Activated CD8-positive, alpha-beta memory T cell treated with anti-CD3 and anti-CD28 coated beads, Interleukin-2, amount 10 ng/mL, durations not matched to agents 7 days and 5 days (primary cell): ENCODE measurements at regions of chr14 and their contacts with region 1.

Region 1: GRCh38 chr14:105086833-105087307 is 21.6 kb upstream of the GPR132 start:
- DNase-seq: peak; percentile 93
- ATAC-seq: peak; percentile 91
- H3K4me3 Mint-ChIP-seq: peak overlapping the region; percentile 68
- H3K27ac Mint-ChIP-seq: peak overlapping the region; percentile 65
- H3K4me1 Mint-ChIP-seq: peaks cover 27% of the 10 kb centered on the region
- H3K27me3 Mint-ChIP-seq: peaks cover 13% of the 10 kb centered on the region

Region 2: GRCh38 chr14:104895786-104896661 is 190.8 kb before region 1 on chr14:
- CTCF ChIA-PET with region 1: no interaction called
- DNase-seq: peak; percentile 37
- ATAC-seq: no peak
- H3K4me3 Mint-ChIP-seq: no peak overlapping the region
- H3K27ac Mint-ChIP-seq: no peak overlapping the region
- H3K4me1 Mint-ChIP-seq: peaks cover 4% of the 10 kb centered on the region
- H3K27me3 Mint-ChIP-seq: peaks cover 22% of the 10 kb centered on the region

Region 3: DNA sequence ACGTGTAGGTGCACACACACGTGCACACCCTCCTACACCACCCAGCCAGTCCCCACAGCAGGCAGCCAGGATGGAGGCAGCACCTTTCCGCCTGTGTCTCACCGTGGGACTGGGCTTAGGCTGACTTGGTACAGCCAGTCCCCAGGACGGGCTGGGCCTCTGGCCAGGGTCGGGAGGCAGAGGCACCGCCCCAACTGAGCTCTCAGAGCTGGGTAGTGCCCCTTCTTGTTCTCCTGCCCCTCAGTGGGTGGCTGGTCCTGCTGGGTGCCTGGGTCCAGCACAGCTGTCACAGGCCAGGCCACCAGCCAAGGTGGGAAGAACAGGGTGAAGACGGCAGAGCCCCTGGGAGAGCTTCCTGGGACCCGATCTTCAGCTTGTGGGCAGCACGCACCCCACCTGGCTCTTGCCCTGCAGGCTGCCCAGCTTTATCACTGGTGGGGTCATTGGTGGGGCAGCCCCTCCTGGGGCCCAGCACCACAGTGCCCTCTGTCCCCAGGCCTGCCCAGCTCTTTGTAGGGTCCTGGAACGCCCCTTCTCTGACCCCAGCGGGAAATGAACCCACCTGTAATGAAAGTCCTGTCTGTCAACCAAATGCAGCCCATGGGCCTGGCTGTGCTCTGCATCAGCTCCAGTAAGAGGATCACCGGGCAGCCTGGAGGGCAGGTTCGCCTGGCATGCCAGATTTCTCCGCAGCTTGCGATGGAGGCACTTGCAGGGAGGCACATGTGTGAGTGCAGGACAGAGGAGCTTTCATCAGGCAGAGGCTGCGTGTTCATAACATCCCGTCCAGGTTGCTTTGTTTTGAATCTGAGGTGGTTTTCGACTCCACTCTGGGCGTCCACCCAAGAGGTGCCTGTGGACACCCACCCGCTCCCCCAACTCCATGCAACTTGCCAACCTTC is 80.7 kb before region 1 on chr14:
- CTCF ChIA-PET with region 1: no interaction called
- DNase-seq: no peak
- ATAC-seq: no peak
- H3K4me3 Mint-ChIP-seq: no peak overlapping the region
- H3K27ac Mint-ChIP-seq: no peak overlapping the region
- H3K4me1 Mint-ChIP-seq: peaks cover 1% of the 10 kb centered on the region
- H3K27me3 Mint-ChIP-seq: no peaks in the 10 kb centered on the region

Region 4: GRCh38 chr14:105020815-105021655 is 65.8 kb before region 1 on chr14 and contains the start of gene CDCA4:
- CTCF ChIA-PET with region 1: interaction called, 14 read pairs
- DNase-seq: peak; percentile 98
- ATAC-seq: peak; percentile 85
- H3K4me3 Mint-ChIP-seq: peak within 1 kb of the TSS; percentile 98
- H3K27ac Mint-ChIP-seq: peak within 1 kb of the TSS; percentile 90
- H3K4me1 Mint-ChIP-seq: peaks cover 72% of the 10 kb centered on the region
- H3K27me3 Mint-ChIP-seq: no peaks in the 10 kb centered on the region
- total RNA-seq, gene CDCA4: 70.8 to 77.8 TPM

Region 5: GRCh38 chr14:105075379-105076295 is 11.2 kb before region 1 on chr14:
- CTCF ChIA-PET with region 1: interaction called, 103 read pairs
- DNase-seq: peak; percentile 75
- ATAC-seq: peak; percentile 64
- H3K4me3 Mint-ChIP-seq: no peak overlapping the region
- H3K27ac Mint-ChIP-seq: no peak overlapping the region
- H3K4me1 Mint-ChIP-seq: peaks cover 35% of the 10 kb centered on the region
- H3K27me3 Mint-ChIP-seq: peaks cover 5% of the 10 kb centered on the region

Region 6: DNA sequence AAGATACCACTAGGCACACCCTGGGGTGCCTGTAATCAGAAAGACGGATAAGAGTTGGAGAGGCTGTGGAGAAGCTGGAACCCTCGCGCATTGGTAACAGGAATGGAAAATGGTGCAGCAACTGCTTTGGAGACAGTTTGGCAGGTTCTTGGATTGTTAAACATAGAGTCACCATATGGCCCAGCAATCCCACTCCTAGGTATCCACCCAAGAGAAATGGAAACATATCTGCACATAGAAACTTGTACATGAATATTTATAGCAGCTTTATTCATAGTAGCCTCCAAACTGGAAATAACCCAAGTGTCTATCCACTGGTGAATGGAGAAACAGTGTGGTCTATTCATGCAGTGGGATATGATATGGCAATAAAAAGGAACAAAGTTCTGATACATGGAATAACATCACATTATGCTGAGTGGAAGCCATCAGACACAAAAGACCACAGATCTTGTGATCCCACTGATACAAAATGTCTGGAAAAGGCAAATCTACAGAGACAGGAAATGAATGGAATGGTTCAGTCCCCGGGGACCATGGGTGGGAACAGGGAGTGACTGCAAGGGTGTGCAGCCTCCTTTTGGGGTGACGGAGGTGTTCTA is 36.3 kb after region 1 on chr14:
- CTCF ChIA-PET with region 1: no interaction called
- DNase-seq: peak; percentile 23
- ATAC-seq: no peak
- H3K4me3 Mint-ChIP-seq: no peak overlapping the region
- H3K27ac Mint-ChIP-seq: no peak overlapping the region
- H3K4me1 Mint-ChIP-seq: peaks cover 3% of the 10 kb centered on the region
- H3K27me3 Mint-ChIP-seq: peaks cover 27% of the 10 kb centered on the region

Region 7: DNA sequence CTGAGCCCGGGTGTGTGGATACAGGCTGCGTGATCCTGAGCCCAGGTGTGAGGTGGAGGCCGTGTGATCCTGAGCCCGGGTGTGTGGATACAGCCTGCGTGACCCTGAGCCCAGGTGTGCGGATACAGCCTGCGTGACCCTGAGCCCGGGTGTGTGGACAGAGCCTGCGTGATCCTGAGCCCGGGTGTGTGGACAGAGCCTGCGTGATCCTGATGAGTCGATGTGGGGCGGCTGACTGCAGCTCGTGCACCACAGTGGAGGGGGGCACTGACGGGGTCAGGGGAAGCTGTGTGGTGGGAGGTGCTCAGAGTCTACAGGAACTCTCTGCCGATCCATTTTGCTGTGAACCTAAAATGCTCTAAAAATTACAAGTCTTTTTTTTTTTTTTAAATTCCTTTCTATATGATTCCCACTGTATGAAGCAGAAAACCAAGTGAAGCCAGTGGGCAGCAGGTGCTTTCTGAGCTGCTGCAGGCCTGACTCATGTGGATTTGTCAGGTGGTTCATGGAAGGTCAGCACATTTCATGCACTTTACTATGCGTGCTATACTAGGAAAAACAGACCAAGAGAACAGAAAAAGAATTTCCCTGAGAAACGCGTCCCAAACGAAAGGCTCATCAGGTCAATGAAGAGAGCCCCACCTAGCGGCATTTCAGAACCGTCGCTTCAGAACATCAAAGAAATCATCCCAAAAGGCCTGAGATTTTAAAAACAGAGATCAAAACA is 194.7 kb after region 1 on chr14:
- CTCF ChIA-PET with region 1: interaction called, 10 read pairs
- DNase-seq: no peak
- ATAC-seq: no peak
- H3K4me3 Mint-ChIP-seq: no peak overlapping the region
- H3K27ac Mint-ChIP-seq: no peak overlapping the region
- H3K4me1 Mint-ChIP-seq: peaks cover 18% of the 10 kb centered on the region
- H3K27me3 Mint-ChIP-seq: no peaks in the 10 kb centered on the region

Region 8: GRCh38 chr14:105351920-105352851 is 265.3 kb after region 1 on chr14:
- CTCF ChIA-PET with region 1: interaction called, 36 read pairs
- DNase-seq: peak; percentile 93
- ATAC-seq: peak; percentile 96
- H3K4me3 Mint-ChIP-seq: no peak overlapping the region
- H3K27ac Mint-ChIP-seq: no peak overlapping the region
- H3K4me1 Mint-ChIP-seq: peaks cover 2% of the 10 kb centered on the region
- H3K27me3 Mint-ChIP-seq: no peaks in the 10 kb centered on the region